Activated CD4-positive, alpha-beta memory T cell treated with anti-CD3 and anti-CD28 coated beads, Interleukin-2, amount 10 ng/mL, durations not matched to agents 7 days and 5 days (primary cell): ENCODE measurements at regions of chr9 and their contacts with region 1.

Region 1: DNA sequence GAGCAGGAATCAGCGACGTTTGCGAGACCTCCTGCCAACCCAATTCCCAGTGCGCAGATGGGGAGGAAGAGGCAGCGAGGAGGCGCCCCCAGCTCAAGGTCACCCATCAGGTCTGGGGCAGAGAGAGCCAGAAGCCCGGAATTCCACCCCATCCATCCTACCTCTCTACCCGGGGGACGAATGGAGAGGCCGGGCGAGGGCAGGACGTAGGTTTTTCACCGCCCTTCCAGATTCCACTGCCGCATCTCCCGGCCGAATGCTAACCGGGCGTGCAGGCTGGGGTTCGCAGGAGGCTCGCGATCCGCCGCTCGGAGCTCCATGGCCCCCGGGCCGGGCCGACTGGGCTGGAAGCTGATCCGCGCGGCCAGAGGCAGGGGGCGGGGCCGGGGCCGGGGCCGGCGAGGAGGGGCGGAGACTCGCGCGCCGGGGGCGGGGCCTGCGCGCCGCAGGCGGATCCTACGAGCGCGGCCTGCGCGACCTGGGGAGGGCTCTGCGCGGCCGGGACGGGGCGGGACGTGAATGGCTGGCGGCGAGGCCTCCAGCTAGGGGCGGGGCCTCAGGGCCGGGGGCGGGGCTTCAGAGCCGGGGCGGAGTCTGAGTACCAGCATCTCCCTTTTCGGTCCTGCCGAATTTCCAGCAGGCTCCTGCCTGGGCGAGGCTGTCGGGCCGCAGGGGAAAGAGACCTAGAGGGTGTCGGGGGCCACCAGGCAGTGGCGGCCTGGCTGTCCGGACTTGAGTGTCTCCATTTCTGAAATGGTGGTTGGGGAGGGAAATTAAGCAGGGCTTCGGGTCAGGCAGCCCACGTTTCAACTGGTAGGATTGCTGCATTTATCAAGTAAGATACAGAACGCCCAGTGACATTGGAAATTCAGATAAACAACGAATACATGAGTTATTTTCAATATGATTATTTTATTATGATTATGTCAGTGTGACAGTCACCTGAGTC is at the start of gene ST6GALNAC4:
- DNase-seq: peak; percentile 96
- H3K4me3 Mint-ChIP-seq: peak within 1 kb of the TSS; percentile 72
- H3K27ac Mint-ChIP-seq: peak within 1 kb of the TSS; percentile 65
- H3K4me1 Mint-ChIP-seq: peaks cover 65% of the 10 kb centered on the region
- H3K27me3 Mint-ChIP-seq: peaks cover under 1% of the 10 kb centered on the region
- total RNA-seq, gene ST6GALNAC4: 19.4 to 21.5 TPM

Region 2: GRCh38 chr9:127770905-127771569 is 145.9 kb before region 1 on chr9:
- CTCF ChIA-PET with region 1: interaction called, 11 read pairs
- POLR2A ChIA-PET with region 1: interaction called, 3 read pairs
- DNase-seq: peak; percentile 98
- H3K4me3 Mint-ChIP-seq: peak overlapping the region; percentile 86
- H3K27ac Mint-ChIP-seq: peak overlapping the region; percentile 89
- H3K4me1 Mint-ChIP-seq: peaks cover 81% of the 10 kb centered on the region
- H3K27me3 Mint-ChIP-seq: no peaks in the 10 kb centered on the region

Region 3: DNA sequence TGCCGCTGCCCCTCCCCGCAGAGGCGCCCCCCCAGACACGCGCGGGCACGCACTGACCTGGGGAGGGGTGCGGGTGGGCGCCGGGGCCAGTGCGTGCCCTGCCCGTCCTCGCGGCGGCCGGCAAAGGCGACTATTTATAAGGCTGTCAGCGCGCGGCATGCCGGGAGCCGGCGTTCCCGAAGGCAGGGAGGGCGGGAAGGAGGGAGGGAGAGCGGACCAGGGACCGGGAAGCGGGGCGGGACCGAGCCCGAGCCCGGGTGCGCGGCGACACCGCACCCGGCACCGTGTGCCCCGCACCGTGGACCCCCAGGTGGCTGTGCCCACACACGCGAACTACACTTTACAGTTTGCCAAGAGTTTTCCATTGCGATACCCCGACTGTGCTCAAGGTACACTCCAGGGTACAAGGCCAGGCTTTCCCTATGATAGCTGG is 39.4 kb before region 1 on chr9 and contains the start of gene AK1:
- CTCF ChIA-PET with region 1: interaction called, 17 read pairs
- POLR2A ChIA-PET with region 1: interaction called, 3 read pairs
- DNase-seq: no peak
- H3K4me3 Mint-ChIP-seq: no peak within 1 kb of the TSS
- H3K27ac Mint-ChIP-seq: no peak within 1 kb of the TSS
- H3K4me1 Mint-ChIP-seq: peaks cover 2% of the 10 kb centered on the region
- H3K27me3 Mint-ChIP-seq: no peaks in the 10 kb centered on the region
- total RNA-seq, gene AK1: 80.9 to 81.9 TPM